ENCODE measurements at regions of chr4 and their contacts with region 1.

Region 1: DNA sequence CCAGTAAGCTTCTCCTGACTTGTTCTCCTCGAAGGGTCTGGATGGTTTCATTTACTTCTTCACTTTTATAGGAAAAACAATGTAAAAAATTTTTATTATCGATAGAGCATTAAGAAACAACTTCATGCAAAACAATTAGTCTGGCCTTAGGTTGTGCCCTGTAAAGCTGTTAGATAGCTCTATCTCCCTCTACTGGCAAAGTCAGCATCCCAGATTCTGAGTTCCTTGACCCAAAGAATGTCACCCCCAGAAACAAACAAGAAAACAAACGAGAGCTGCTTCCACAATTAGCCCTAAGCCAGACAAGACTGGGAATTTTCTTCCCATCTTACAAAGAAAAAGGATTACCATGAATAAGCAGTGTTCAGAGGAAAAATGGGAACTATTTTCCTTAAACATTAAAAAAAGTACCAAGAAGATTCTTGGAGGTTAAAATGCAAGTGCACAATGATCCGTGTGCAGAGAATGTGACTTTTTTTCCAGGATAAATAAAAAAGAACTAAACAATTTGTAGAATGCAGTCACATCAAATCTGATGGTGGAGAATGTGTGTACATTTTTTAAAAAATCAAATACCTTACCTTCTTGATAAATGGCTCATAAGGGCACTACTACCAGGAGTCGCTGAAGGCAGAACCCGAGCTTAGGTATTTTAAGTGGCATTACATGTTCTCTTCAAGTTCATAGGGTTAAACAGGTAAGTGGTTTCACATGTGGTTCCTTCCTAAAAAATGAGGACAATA is 293.2 kb downstream of the FBXO8 start:
- DNase-seq: no peak
- H3K4me3 ChIP-seq: no peak overlapping the region
- H3K27ac ChIP-seq: no peak overlapping the region
- H3K27me3 ChIP-seq: no peaks in the 10 kb centered on the region
- CTCF ChIP-seq: peak; percentile 80

Region 2: GRCh38 chr4:173852775-173853174 is 137.5 kb before region 1 on chr4:
- CTCF ChIA-PET with region 1: interaction called, 10 read pairs
- POLR2A ChIA-PET with region 1: no interaction called
- DNase-seq: no peak
- H3K4me3 ChIP-seq: no peak overlapping the region
- H3K27ac ChIP-seq: no peak overlapping the region
- H3K27me3 ChIP-seq: no peaks in the 10 kb centered on the region
- CTCF ChIP-seq: no peak

Region 3: DNA sequence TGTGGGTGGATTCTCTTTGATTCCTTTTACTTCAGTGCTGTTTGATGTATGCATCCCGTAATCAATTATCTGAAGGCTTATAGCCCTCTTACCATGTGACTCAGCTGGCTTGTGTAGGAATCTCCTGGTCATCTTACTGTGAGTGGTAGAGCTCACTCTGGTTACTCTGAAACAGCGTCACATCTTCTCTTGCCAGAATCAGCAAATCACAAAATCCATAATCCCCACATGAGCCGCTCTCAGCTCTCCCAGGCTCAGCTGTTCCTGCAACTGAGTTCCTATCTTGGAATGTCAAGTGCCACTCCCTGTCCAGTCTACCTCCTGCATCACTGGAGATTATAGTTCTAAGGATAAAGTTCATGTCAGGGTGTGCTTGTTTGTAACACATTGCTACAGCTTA is 15.1 kb after region 1 on chr4:
- CTCF ChIA-PET with region 1: interaction called, 18 read pairs
- POLR2A ChIA-PET with region 1: no interaction called
- DNase-seq: no peak
- H3K4me3 ChIP-seq: no peak overlapping the region
- H3K27ac ChIP-seq: no peak overlapping the region
- H3K27me3 ChIP-seq: no peaks in the 10 kb centered on the region
- CTCF ChIP-seq: no peak